Lower lobe of right lung (tissue), 2 donors: ENCODE measurements at regions of chr4 and their contacts with region 1.

Region 1: DNA sequence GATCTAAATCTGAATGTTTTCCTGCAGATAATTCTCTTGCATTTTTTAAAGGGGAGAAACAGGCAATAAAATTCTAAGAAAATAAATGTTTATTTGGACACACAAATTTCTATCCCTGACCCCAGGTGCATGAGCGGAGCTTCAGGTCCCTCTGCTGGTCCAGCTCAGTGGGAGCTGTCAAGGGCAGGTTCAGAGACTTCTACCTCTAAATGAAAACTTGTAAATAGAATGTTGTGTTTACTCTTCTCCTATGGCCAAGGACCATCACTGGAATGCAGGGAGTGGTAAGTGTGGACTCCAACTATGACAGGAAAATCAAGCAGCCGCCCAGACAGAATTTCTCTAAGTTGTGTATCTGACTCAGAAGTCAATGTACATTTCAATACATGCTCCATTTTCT is 148.6 kb upstream of the TTC29 start:
- DNase-seq: no peak
- ATAC-seq: peak; percentile 42 to 72
- H3K4me3 ChIP-seq: no peak overlapping the region
- H3K27ac ChIP-seq: no peak overlapping the region
- H3K4me1 ChIP-seq: no peaks in the 10 kb centered on the region
- H3K27me3 ChIP-seq: no peaks in the 10 kb centered on the region
- CTCF ChIP-seq: no peak

Region 2: DNA sequence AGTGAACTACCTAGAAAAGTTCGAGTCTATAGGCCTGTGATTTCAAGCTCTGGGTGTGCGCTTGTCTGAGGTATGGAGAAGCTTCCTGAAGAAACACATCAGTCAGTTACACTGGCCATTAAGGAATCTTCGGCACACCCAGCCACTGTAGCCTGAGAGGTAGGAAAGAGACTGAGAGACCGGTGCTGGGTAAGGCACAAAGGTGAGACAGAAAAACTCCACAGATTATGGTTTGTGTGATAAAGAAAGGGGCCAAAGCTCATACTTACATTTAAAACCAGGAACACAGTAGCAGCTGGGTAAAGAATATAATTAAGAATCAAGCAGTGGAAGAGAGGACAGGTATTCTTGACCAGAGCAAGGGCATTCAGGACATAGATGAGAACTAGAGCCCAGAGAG is 73.8 kb before region 1 on chr4:
- intact Hi-C with region 1: loop called (anchors 5 kb)
- DNase-seq: no peak
- ATAC-seq: no peak
- H3K4me3 ChIP-seq: no peak overlapping the region
- H3K27ac ChIP-seq: no peak overlapping the region
- H3K4me1 ChIP-seq: no peaks in the 10 kb centered on the region
- H3K27me3 ChIP-seq: no peaks in the 10 kb centered on the region
- CTCF ChIP-seq: no peak

Region 3: GRCh38 chr4:147371661-147372060 is 277.4 kb after region 1 on chr4:
- intact Hi-C with region 1: no loop called
- DNase-seq: no peak
- ATAC-seq: no peak
- H3K4me3 ChIP-seq: no peak overlapping the region
- H3K27ac ChIP-seq: no peak overlapping the region
- H3K4me1 ChIP-seq: peaks cover 10% of the 10 kb centered on the region
- H3K27me3 ChIP-seq: no peaks in the 10 kb centered on the region
- CTCF ChIP-seq: no peak